BJ (cell line): ENCODE measurements at regions of chr1 and their contacts with region 1.

Region 1: GRCh38 chr1:16009030-16009709 is 5.1 kb downstream of the SRARP start:
- DNase-seq: no peak
- H3K4me3 ChIP-seq: no peak overlapping the region
- H3K27me3 ChIP-seq: no peaks in the 10 kb centered on the region
- CTCF ChIP-seq: peak; percentile 97

Region 2: GRCh38 chr1:15684468-15685291 is 324.5 kb before region 1 on chr1:
- CTCF ChIA-PET with region 1: no interaction called
- POLR2A ChIA-PET with region 1: no interaction called
- DNase-seq: no peak
- H3K4me3 ChIP-seq: peak overlapping the region; percentile 81
- H3K27me3 ChIP-seq: no peaks in the 10 kb centered on the region
- CTCF ChIP-seq: peak; percentile 27; the same call in 1 of the 2 replicates

Region 3: DNA sequence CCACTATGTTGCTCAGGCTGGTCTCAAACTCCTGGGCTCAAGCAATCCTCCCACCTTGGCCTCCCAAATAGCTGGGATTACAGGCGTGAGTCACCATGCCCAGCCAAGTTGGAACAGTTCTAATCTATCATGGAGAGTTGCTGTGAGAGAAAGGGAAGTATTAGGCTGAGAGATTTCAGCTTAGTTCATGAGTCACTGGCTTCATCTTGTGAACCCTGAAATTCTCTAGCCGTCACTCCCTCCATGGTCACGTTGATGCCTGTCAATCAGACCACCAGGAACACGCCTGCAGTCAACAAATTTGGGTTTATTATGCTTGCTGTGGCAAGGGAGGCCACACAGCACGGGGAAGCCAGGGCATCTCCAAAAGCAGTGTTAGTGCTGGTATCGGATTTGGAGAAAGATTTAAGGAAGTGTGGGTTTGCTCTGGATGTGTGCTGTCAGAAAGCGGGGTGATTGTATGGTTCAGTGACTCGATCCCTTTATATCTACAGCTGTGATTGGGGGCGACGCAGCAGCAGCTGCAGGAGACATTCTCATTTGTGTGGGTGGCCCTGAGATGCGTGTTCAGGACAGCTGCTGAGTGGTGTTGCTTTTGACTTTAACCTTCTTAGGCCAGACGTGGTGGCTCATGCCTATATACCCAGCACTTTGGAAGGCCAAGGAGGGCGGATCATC is 220.4 kb before region 1 on chr1:
- CTCF ChIA-PET with region 1: interaction called, 10 read pairs
- POLR2A ChIA-PET with region 1: no interaction called
- DNase-seq: no peak
- H3K4me3 ChIP-seq: no peak overlapping the region
- H3K27me3 ChIP-seq: no peaks in the 10 kb centered on the region
- CTCF ChIP-seq: no peak

Region 4: GRCh38 chr1:15994590-15995351 is 14.4 kb before region 1 on chr1:
- CTCF ChIA-PET with region 1: interaction called, 16 read pairs
- POLR2A ChIA-PET with region 1: no interaction called
- DNase-seq: no peak
- H3K4me3 ChIP-seq: no peak overlapping the region
- H3K27me3 ChIP-seq: peaks cover 3% of the 10 kb centered on the region
- CTCF ChIP-seq: peak; percentile 99

Region 5: GRCh38 chr1:16032388-16033103 is 23.4 kb after region 1 on chr1:
- CTCF ChIA-PET with region 1: interaction called, 66 read pairs
- POLR2A ChIA-PET with region 1: no interaction called
- DNase-seq: no peak
- H3K4me3 ChIP-seq: no peak overlapping the region
- H3K27me3 ChIP-seq: no peaks in the 10 kb centered on the region
- CTCF ChIP-seq: peak; percentile 99

Region 6: DNA sequence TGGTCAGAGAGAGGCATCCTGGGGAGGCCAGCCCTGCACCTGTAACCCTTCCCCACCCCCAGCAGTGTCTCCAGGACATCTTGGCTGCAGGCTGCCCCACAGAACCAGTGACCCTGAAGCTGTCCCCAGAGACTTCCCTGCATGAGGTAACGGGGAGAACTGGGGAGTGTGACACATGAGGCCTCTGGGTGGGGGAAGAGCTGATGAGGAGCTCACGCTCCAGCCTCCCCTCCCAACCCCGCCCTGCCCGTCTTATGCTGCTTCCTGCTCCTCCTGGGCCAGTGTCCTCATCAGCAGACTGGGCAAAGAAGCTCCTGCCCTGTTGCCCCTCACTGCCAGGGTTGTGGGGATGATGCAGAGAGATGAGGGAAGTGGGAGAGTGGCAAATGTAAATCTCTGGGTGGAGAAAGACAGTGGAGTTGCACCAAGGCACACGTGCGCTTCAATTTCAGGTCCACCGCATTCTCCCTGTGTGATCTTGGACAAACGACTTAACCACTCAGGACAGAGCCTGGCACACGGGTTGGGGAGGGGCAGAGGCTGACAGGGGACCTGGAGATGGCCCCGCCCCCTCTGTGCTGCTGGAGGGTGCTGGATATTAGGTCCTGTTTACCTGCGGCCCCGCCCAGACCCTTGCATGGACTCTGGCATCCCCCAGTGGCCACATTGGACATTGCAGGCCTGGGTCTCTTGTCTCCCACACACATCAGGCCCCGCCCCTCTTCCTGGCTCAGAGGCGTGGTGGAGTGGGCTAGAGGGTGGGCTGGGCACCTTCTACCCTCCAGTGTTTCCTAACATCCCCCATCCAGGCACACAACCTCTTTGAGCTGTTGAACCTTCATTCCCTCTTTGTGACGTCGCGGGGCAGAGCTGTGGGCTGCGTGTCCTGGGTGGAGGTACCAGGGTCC is 46.7 kb after region 1 on chr1:
- CTCF ChIA-PET with region 1: interaction called, 53 read pairs
- POLR2A ChIA-PET with region 1: no interaction called
- DNase-seq: no peak
- H3K4me3 ChIP-seq: no peak overlapping the region
- H3K27me3 ChIP-seq: no peaks in the 10 kb centered on the region
- CTCF ChIP-seq: peak; percentile 96

Region 7: DNA sequence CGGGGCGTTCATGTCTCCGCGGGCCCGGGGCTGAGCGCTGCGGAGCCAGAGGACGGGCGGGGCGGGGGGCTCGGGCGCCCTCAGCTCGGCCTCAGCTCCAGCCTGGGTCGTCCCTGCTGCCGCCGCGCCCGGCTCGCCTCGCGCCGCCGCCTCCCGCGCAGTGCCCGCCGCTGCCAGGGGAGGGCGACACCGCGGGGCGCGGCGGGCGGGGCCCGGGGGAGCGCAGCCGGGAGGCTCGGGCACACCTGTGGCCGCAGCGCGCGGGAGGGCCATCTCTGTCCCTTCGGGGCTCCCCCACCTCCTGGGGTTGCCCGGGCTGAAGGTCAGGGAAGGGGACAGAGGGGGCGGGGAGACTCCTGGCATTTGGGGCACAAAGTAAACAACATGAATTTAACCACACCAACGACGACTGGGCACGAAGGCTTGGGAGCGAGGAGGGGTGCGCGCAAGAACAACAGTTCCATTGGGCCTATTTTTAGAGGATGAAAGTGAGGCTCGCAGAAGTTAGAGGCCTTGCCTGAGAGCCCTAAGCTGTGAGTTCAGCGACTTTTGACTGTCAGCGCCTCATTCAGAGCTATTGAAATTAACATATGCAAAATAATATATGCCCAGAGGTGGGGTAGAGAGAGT is 64.4 kb after region 1 on chr1 and contains the start of gene FAM131C:
- CTCF ChIA-PET with region 1: interaction called, 16 read pairs
- POLR2A ChIA-PET with region 1: no interaction called
- DNase-seq: no peak
- H3K4me3 ChIP-seq: peak within 1 kb of the TSS; percentile 48
- H3K27me3 ChIP-seq: no peaks in the 10 kb centered on the region
- CTCF ChIP-seq: no peak
- polyA plus RNA-seq, gene FAM131C: 0.34 and 0.47 TPM in 2 replicates